Activated T-helper 1 cell treated with anti-CD3 and anti-CD28 coated beads, Interleukin-12 subunit alpha, Interleukin-12 subunit beta, Interleukin-2, Interleukin-4 antibody, amounts not matched to agents 30 ng/mL and 10 ng/mL and 1 ng/mL, durations not matched to agents 14 hours and 24 hours and 36 hours (primary cell): ENCODE measurements at regions of chr14 and their contacts with region 1.

Region 1: DNA sequence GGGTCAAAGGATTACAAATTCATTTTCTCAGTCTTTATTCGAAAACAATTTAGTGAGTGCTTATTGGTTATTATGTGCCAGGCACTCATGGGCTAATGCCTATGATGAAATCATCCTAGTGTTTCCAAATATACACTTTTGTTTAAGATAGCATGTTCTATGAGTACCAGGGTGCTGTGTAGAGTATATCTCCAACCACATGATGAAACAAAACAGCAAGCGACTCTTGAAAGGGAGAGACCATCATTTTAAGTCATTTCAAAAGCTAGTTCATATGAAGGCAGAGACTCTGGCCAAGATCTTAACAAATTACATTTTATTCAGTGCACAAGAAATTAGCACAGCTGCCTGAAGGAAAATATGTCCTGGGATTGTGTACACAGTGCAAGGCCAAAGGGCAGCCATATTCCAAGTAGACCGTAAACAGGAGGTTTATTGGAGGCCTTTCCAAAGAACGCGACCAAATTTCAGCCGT is 204.2 kb downstream of the EFCAB11 start:
- DNase-seq: no peak
- H3K4me3 Mint-ChIP-seq: no peak overlapping the region
- H3K27ac Mint-ChIP-seq: no peak overlapping the region
- H3K4me1 Mint-ChIP-seq: peaks cover 23% of the 10 kb centered on the region
- H3K27me3 Mint-ChIP-seq: no peaks in the 10 kb centered on the region

Region 2: DNA sequence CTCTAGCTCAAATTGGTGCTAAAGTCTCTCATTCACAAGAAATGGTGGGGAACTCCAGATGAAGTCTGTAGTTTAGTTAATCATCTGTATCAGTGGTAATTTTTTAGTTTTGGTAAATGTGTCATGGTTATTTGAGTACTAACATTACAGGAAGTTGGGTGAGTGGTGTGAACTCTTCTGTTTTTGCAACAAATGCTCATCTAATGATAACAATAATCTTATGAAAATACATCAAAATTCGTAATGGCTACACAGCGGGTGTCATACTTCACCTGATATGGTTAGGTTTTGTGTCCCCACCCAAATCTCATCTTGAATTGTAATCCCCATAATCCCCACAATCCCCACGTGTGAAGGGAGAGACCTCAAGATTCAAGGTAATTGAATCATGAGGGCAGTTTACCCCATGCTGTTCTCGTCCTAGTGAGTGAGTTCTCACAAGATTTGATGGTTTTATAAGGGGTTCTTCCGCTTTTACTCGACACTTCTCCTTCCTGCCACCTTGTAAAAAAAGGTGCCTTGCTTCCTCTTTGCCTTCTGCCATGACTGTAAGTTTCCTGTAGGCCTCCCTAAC is 124.0 kb before region 1 on chr14:
- intact Hi-C with region 1: loop called (anchors 1 kb)
- DNase-seq: no peak
- H3K4me3 Mint-ChIP-seq: no peak overlapping the region
- H3K27ac Mint-ChIP-seq: peak overlapping the region; percentile 89
- H3K4me1 Mint-ChIP-seq: peaks cover 67% of the 10 kb centered on the region
- H3K27me3 Mint-ChIP-seq: no peaks in the 10 kb centered on the region

Region 3: DNA sequence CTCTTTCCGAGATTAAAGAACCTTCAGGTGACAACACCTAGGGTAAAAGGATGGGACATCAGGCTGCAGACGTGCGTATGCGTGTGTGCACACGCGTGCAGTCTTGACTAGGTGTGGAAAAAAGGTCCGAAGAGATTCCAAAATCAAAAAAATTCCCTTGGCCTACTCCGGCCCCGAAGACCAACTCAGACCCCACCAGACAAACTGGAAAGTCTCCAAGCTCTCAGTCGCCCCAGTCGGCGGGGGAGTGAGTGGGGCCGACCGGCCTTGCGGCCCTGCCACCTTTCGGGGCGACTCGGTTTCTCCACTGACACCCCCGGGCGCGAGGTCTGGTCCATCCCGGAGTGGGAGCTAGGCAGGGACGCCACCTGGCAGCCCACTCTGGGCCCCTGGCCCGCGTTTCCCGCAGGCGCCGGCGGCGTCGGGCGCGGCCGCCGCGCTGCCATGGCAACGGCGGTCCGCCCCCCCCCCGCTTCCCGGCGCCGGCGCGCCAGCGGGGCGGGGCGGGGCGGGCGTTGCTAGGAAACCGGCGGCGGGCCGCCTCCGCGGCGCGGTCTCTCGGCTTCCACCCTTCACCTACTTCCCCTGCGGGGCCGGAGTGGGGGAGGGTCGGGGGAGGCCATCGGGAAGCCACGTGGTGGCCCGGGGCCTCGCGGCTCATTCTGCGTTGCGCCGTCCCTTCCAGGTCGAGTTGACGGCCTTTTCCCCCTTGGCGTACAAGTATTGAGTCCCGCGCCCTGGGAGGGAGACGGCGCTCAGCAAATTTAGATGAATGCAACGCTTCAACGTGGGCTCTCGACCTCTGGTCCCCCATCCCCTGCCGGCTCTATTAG is 48.9 kb before region 1 on chr14:
- intact Hi-C with region 1: loop called (anchors 1 kb)
- DNase-seq: peak; percentile 78
- H3K4me3 Mint-ChIP-seq: peak overlapping the region; percentile 70
- H3K27ac Mint-ChIP-seq: peak overlapping the region; percentile 84
- H3K4me1 Mint-ChIP-seq: peaks cover 51% of the 10 kb centered on the region
- H3K27me3 Mint-ChIP-seq: peaks cover 4% of the 10 kb centered on the region

Region 4: GRCh38 chr14:89720741-89721315 is 29.5 kb before region 1 on chr14:
- intact Hi-C with region 1: loop called (anchors 1 kb)
- DNase-seq: peak; percentile 59
- H3K4me3 Mint-ChIP-seq: peak overlapping the region; percentile 49
- H3K27ac Mint-ChIP-seq: peak overlapping the region; percentile 86
- H3K4me1 Mint-ChIP-seq: peaks cover 64% of the 10 kb centered on the region
- H3K27me3 Mint-ChIP-seq: no peaks in the 10 kb centered on the region